Natural killer cell (primary cell): ENCODE measurements at regions of chr11 and their contacts with region 1.

Region 1: GRCh38 chr11:121417055-121417551 is 35.0 kb upstream of the SORL1 start:
- DNase-seq: peak; percentile 39 to 72
- ATAC-seq: peak; percentile 52 to 79 (median 61)
- H3K4me3 ChIP-seq: no peak overlapping the region
- H3K4me3 Mint-ChIP-seq: peak overlapping the region; percentile 55
- H3K27ac ChIP-seq: peak overlapping the region; percentile 70
- H3K27ac Mint-ChIP-seq: peak overlapping the region; percentile 87 to 89
- H3K4me1 ChIP-seq: peaks cover 32% of the 10 kb centered on the region
- H3K4me1 Mint-ChIP-seq: peaks cover 29 to 42% of the 10 kb centered on the region in 2 donors
- H3K27me3 ChIP-seq: no peaks in the 10 kb centered on the region
- H3K27me3 Mint-ChIP-seq: no peaks in the 10 kb centered on the region
- CTCF ChIP-seq: no peak

Region 2: GRCh38 chr11:121282886-121283502 is 134.1 kb before region 1 on chr11:
- intact Hi-C with region 1: no loop called
- DNase-seq: no peak
- ATAC-seq: no peak
- H3K4me3 ChIP-seq: no peak overlapping the region
- H3K4me3 Mint-ChIP-seq: no peak overlapping the region
- H3K27ac ChIP-seq: no peak overlapping the region
- H3K27ac Mint-ChIP-seq: no peak overlapping the region
- H3K4me1 ChIP-seq: no peaks in the 10 kb centered on the region
- H3K4me1 Mint-ChIP-seq: no peaks in the 10 kb centered on the region
- H3K27me3 ChIP-seq: no peaks in the 10 kb centered on the region
- H3K27me3 Mint-ChIP-seq: peaks cover 47 to 62% of the 10 kb centered on the region in 2 donors
- CTCF ChIP-seq: no peak

Region 3: DNA sequence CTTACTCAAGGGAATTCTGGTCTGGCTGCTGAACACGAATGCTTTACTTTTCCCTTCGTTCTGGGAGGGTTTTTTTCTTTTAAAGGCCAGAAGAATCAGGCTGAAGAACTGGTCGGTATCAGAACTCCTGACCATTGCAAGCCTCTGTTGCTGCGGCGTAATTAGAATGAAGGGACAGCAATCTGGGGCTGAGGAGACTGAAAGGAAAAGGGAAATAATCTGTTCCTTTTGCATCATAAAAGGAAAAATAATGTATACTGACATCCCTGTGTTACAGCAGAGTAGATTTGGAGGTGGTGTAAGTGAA is 123.9 kb before region 1 on chr11:
- intact Hi-C with region 1: no loop called
- DNase-seq: no peak
- ATAC-seq: no peak
- H3K4me3 ChIP-seq: peak overlapping the region; percentile 63
- H3K4me3 Mint-ChIP-seq: peak overlapping the region; percentile 97
- H3K27ac ChIP-seq: peak overlapping the region; percentile 89
- H3K27ac Mint-ChIP-seq: peak overlapping the region; percentile 96 to 99
- H3K4me1 ChIP-seq: peaks cover 10% of the 10 kb centered on the region
- H3K4me1 Mint-ChIP-seq: peaks cover 32 to 42% of the 10 kb centered on the region in 2 donors
- H3K27me3 ChIP-seq: no peaks in the 10 kb centered on the region
- H3K27me3 Mint-ChIP-seq: no peaks in the 10 kb centered on the region
- CTCF ChIP-seq: no peak

Region 4: GRCh38 chr11:121367001-121367843 is 49.9 kb before region 1 on chr11:
- intact Hi-C with region 1: loop called (anchors 5 kb)
- DNase-seq: peak; percentile 20 to 74
- ATAC-seq: peak; percentile 84 to 97 (median 92)
- H3K4me3 ChIP-seq: no peak overlapping the region
- H3K4me3 Mint-ChIP-seq: peak overlapping the region; percentile 7
- H3K27ac ChIP-seq: peak overlapping the region; percentile 21
- H3K27ac Mint-ChIP-seq: peak overlapping the region; percentile 60 to 79
- H3K4me1 ChIP-seq: peaks cover 9% of the 10 kb centered on the region
- H3K4me1 Mint-ChIP-seq: peaks cover 14 to 15% of the 10 kb centered on the region in 2 donors
- H3K27me3 ChIP-seq: no peaks in the 10 kb centered on the region
- H3K27me3 Mint-ChIP-seq: no peaks in the 10 kb centered on the region
- CTCF ChIP-seq: no peak

Region 5: DNA sequence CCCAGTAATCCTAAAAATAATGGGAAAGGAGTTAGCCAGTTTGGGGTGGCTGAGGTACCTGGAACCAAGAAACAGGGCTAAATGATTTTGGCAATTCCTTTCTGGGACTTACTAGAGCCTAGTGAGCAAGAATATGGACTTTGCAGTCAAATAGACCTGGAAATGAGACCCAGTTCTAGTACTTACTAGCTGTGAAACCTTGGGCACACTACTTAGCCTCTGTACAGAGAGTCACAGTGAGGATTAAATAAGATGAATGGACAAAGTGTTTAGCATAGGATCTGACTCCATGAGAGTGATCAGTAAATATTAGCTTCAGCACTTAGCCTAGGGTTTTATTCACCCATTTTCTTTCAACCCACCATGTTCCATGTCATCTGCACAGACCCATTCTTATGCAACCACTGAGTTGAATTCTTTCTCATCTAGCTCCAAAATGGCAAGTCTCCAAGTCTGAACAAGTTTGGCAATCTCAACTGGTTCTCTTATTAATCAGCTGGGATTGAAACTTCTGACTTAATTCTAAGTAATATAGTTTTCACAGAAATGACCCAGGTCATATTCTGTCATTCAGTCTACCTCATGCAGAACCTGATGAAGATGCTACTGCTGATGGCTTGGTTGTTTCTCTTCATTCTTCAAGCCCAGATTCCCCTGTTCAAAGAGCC is 20.0 kb after region 1 on chr11:
- intact Hi-C with region 1: no loop called
- DNase-seq: no peak
- ATAC-seq: no peak
- H3K4me3 ChIP-seq: no peak overlapping the region
- H3K4me3 Mint-ChIP-seq: no peak overlapping the region
- H3K27ac ChIP-seq: no peak overlapping the region
- H3K27ac Mint-ChIP-seq: no peak overlapping the region
- H3K4me1 ChIP-seq: no peaks in the 10 kb centered on the region
- H3K4me1 Mint-ChIP-seq: peaks cover 18 to 26% of the 10 kb centered on the region in 2 donors
- H3K27me3 ChIP-seq: no peaks in the 10 kb centered on the region
- H3K27me3 Mint-ChIP-seq: no peaks in the 10 kb centered on the region
- CTCF ChIP-seq: no peak